ENCODE measurements at regions of chr4 and their contacts with region 1.

Region 1: DNA sequence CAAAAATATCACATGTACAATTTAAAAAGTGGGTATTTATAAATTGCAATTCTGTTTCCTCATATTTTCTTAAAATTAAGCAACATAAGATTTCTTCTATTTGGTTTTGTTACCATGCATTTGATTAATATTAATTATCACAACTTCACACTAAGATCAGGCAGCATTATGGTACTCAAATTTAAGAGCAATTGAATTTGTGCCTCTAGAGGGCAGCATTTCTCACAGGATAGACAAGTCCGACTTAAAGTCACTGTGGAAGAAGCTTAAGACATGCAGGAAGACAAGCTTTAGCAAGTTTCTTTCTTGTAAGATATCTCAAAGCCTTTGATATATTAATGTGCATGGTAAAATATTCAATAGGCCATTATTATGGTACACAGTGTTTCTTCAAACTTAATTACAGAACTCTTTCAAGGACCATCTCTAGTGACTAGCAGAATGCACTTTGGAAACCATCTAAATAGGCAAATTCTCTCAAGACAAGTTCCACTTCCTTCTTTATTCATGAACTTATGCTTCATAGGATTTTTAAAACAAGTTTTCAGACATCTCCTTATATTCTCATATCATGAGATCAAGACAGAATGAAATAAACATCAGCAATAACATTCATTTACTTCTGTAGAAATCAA is 35.0 kb downstream of the FBXW7 start:
- DNase-seq: peak; percentile 74
- ATAC-seq: peak; percentile 77
- H3K4me3 ChIP-seq: peak overlapping the region; percentile 21; the same call in 1 of the 2 replicates
- H3K27ac ChIP-seq: peak overlapping the region; percentile 57
- H3K4me1 ChIP-seq: peaks cover 18% of the 10 kb centered on the region
- H3K27me3 ChIP-seq: no peaks in the 10 kb centered on the region
- CTCF ChIP-seq: peak; percentile 61 to 85 (median 83)
- EP300 ChIP-seq: no peak
- POLR2A ChIP-seq: no peak
- RAD21 ChIP-seq: peak; percentile 87

Region 2: GRCh38 chr4:152454398-152455011 is 46.4 kb before region 1 on chr4:
- CTCF ChIA-PET with region 1: interaction called, 154 read pairs
- POLR2A ChIA-PET with region 1: interaction called, 4 read pairs
- RAD21 ChIA-PET with region 1: interaction called, 41 read pairs
- SMC1A ChIA-PET with region 1: interaction called, 152 read pairs
- in situ Hi-C with region 1: no loop called
- intact Hi-C with region 1: loop called (anchors 2 kb)
- DNase-seq: no peak
- ATAC-seq: peak; percentile 15; the same call in 2 of the 3 replicates
- H3K4me3 ChIP-seq: no peak overlapping the region
- H3K27ac ChIP-seq: no peak overlapping the region
- H3K4me1 ChIP-seq: peaks cover 12% of the 10 kb centered on the region
- H3K27me3 ChIP-seq: no peaks in the 10 kb centered on the region
- CTCF ChIP-seq: peak; percentile 50 to 60 (median 60)
- EP300 ChIP-seq: no peak
- POLR2A ChIP-seq: no peak
- RAD21 ChIP-seq: peak; percentile 65

Region 3: DNA sequence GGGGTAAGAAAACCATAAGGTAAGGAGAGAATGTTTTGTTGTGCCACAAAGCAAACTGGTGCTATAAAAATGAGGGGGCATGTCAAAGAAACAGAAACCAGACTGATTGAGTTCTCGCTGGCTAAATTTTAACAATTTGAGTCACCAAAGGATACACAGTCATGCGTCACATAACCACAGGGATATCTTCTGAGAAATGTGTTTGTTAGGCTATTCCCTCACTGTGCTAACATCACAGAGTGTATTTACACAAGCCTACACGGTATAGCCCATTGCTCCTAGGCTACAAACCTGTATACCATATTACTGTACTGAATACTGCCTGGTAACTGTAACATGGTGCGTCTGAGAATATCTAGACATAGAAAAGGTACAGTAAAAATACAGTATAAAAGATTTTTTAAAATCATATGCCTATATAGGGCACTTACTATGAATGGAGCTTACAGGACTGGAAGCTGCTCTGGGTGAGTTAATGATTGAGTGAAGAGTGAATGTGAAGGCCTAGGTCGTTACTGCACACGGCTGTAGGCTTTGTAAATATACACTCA is 15.1 kb before region 1 on chr4:
- CTCF ChIA-PET with region 1: interaction called, 27 read pairs
- POLR2A ChIA-PET with region 1: interaction called, 4 read pairs
- RAD21 ChIA-PET with region 1: interaction called, 39 read pairs
- SMC1A ChIA-PET with region 1: interaction called, 42 read pairs
- in situ Hi-C with region 1: no loop called
- intact Hi-C with region 1: no loop called
- DNase-seq: peak; percentile 86
- ATAC-seq: peak; percentile 98
- H3K4me3 ChIP-seq: no peak overlapping the region
- H3K27ac ChIP-seq: peak overlapping the region; percentile 58
- H3K4me1 ChIP-seq: peaks cover 7% of the 10 kb centered on the region
- H3K27me3 ChIP-seq: no peaks in the 10 kb centered on the region
- CTCF ChIP-seq: no peak
- EP300 ChIP-seq: peak; percentile 85 to 87; a peak in 3 of 4 replicates
- POLR2A ChIP-seq: no peak
- RAD21 ChIP-seq: no peak

Region 4: GRCh38 chr4:152559641-152560040 is 58.7 kb after region 1 on chr4:
- CTCF ChIA-PET with region 1: interaction called, 45 read pairs
- POLR2A ChIA-PET with region 1: interaction called, 11 read pairs
- RAD21 ChIA-PET with region 1: interaction called, 94 read pairs
- SMC1A ChIA-PET with region 1: interaction called, 52 read pairs
- in situ Hi-C with region 1: no loop called
- intact Hi-C with region 1: loop called (anchors 5 kb)
- DNase-seq: no peak
- ATAC-seq: peak; percentile 56
- H3K4me3 ChIP-seq: no peak overlapping the region
- H3K27ac ChIP-seq: peak overlapping the region; percentile 81
- H3K4me1 ChIP-seq: peaks cover 75% of the 10 kb centered on the region
- H3K27me3 ChIP-seq: no peaks in the 10 kb centered on the region
- CTCF ChIP-seq: no peak
- EP300 ChIP-seq: no peak
- POLR2A ChIP-seq: no peak
- RAD21 ChIP-seq: no peak

Region 5: GRCh38 chr4:152601156-152601555 is 100.2 kb after region 1 on chr4:
- CTCF ChIA-PET with region 1: interaction called, 4 read pairs
- POLR2A ChIA-PET with region 1: interaction called, 5 read pairs
- RAD21 ChIA-PET with region 1: interaction called, 12 read pairs
- SMC1A ChIA-PET with region 1: interaction called, 32 read pairs
- in situ Hi-C with region 1: no loop called
- intact Hi-C with region 1: no loop called
- DNase-seq: no peak
- ATAC-seq: no peak
- H3K4me3 ChIP-seq: no peak overlapping the region
- H3K27ac ChIP-seq: no peak overlapping the region
- H3K4me1 ChIP-seq: peaks cover 4% of the 10 kb centered on the region; the same call in 1 of the 2 replicates
- H3K27me3 ChIP-seq: no peaks in the 10 kb centered on the region
- CTCF ChIP-seq: no peak
- EP300 ChIP-seq: no peak
- POLR2A ChIP-seq: no peak
- RAD21 ChIP-seq: no peak

Region 6: GRCh38 chr4:152663203-152664066 is 162.5 kb after region 1 on chr4:
- CTCF ChIA-PET with region 1: interaction called, 3 read pairs
- POLR2A ChIA-PET with region 1: no interaction called
- RAD21 ChIA-PET with region 1: interaction called, 12 read pairs
- SMC1A ChIA-PET with region 1: interaction called, 13 read pairs
- in situ Hi-C with region 1: no loop called
- intact Hi-C with region 1: no loop called
- DNase-seq: peak; percentile 75
- ATAC-seq: peak; percentile 78
- H3K4me3 ChIP-seq: peak overlapping the region; percentile 51; the same call in 1 of the 2 replicates
- H3K27ac ChIP-seq: peak overlapping the region; percentile 79
- H3K4me1 ChIP-seq: peaks cover 66% of the 10 kb centered on the region
- H3K27me3 ChIP-seq: no peaks in the 10 kb centered on the region
- CTCF ChIP-seq: no peak
- EP300 ChIP-seq: peak in 1 of 2 experiments; percentile 32; a peak in 1 of 4 replicates
- POLR2A ChIP-seq: no peak
- RAD21 ChIP-seq: no peak

Region 7: DNA sequence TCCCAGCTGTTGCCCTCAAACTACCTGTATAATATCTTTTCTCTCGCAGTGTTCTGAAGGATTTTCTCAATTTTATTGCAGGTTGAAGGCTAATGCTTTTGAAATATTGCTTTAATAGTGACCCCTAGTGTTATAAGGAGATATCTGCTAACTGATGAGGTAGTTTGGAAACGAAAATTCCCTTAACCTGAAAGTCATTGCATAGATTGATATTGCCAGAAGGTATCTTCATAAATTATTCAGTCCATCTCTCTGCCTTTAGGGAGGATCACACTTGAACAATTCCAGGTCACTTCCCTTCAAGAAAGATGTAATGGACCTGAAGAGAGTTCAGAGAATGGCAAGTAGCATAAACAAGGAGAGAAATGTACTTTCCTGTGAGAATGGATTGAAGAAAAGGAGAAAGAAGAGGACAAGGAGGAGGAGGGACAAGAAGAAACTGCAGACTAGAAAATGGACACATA is 234.5 kb after region 1 on chr4:
- CTCF ChIA-PET with region 1: interaction called, 86 read pairs
- POLR2A ChIA-PET with region 1: interaction called, 5 read pairs
- RAD21 ChIA-PET with region 1: interaction called, 56 read pairs
- SMC1A ChIA-PET with region 1: interaction called, 152 read pairs
- in situ Hi-C with region 1: loop called (anchors 5 kb)
- intact Hi-C with region 1: loop called (anchors 1 kb)
- DNase-seq: peak; percentile 32
- ATAC-seq: peak; percentile 81
- H3K4me3 ChIP-seq: no peak overlapping the region
- H3K27ac ChIP-seq: no peak overlapping the region
- H3K4me1 ChIP-seq: peaks cover 8% of the 10 kb centered on the region; the same call in 1 of the 2 replicates
- H3K27me3 ChIP-seq: no peaks in the 10 kb centered on the region
- CTCF ChIP-seq: peak; percentile 58 to 71 (median 60); a peak in 5 of 6 replicates
- EP300 ChIP-seq: no peak
- POLR2A ChIP-seq: no peak
- RAD21 ChIP-seq: peak; percentile 85

Measured in GM12878 (cell line).